ENCODE measurements at regions of chr3 and their contacts with region 1.

Region 1: GRCh38 chr3:46078712-46079400 is 51.6 kb upstream of the XCR1 start:
- DNase-seq: peak; percentile 95
- ATAC-seq: peak; percentile 99
- H3K4me3 Mint-ChIP-seq: peak overlapping the region; percentile 29
- H3K27ac Mint-ChIP-seq: peak overlapping the region; percentile 58
- H3K4me1 Mint-ChIP-seq: peaks cover 70% of the 10 kb centered on the region
- H3K27me3 Mint-ChIP-seq: no peaks in the 10 kb centered on the region

Region 2: DNA sequence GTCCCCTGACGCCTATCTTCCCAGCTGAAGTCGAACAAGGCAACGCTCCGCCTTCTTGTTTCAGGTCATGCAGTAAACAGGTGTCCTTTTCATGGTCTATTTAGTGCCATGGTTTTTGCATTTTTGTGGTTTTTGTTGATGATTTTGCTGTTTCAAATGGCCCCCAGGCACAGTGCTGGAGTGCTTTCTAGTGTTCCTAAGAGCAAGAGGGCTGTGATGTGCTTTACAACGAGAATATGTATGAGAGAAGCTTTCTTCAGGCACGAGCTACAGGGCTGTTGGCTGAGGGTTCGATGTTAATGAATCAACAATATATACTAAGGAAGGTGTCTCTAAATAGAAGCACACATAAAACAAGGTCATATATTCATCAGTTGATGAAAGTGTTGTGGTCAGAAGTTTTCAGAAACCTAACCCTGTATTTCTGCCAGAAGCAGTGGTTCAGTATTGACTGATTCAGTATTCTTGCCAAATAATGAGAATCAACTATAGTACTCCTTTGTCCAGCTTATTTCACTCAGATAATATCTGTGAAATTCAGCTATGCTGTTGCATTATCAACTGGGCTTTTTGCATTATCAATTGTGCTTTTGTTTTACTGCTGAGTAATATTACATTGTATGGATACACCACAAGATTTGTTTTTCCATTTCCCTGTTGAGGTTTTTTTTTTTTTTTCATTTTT is 465.8 kb before region 1 on chr3:
- CTCF ChIA-PET with region 1: no interaction called
- POLR2A ChIA-PET with region 1: no interaction called
- DNase-seq: no peak
- ATAC-seq: no peak
- H3K4me3 Mint-ChIP-seq: no peak overlapping the region
- H3K27ac Mint-ChIP-seq: peak overlapping the region; percentile 43
- H3K4me1 Mint-ChIP-seq: peaks cover 35% of the 10 kb centered on the region
- H3K27me3 Mint-ChIP-seq: no peaks in the 10 kb centered on the region

Region 3: DNA sequence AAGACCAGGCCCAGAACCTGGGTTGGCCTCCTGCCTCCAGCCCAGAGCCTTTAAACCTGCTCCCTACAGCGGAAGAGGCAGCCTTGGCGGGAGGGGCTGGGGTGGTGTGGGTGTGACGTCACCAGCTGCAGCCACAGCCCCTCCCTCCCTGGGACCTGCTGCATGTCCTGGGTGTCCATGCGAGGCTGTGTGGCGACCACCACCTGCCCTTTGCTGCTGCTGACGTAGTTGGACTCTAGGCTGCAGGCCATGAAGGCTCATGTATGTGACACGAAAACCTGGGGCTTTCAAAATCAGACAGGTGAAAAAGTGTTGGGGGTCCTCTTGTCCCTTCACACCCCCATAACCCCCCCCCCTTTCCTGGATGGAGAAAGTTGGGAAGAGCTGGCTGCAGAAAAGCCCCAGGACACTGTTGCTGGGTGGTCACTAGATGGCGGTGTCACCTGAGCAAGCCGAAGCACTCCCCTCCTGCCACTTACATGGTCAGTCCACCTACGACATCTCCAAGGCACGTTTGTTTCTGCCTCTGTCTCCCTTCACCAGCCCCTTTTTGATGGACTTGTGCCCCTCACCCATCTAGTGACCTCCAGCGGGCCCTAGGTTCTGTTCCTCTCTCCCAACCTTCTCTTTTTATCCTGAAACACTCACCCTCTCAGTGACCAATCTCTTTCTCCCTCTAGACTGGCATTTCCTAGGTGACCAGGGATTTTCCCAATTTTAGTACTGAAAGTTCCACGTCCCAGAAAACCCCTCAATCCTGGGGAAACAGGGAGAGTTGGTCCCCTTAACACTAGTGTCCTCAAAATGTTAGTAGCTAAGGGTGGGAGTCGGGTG is 317.8 kb before region 1 on chr3:
- CTCF ChIA-PET with region 1: interaction called, 39 read pairs
- POLR2A ChIA-PET with region 1: no interaction called
- DNase-seq: peak; percentile 61
- ATAC-seq: peak; percentile 64
- H3K4me3 Mint-ChIP-seq: no peak overlapping the region
- H3K27ac Mint-ChIP-seq: no peak overlapping the region
- H3K4me1 Mint-ChIP-seq: peaks cover 5% of the 10 kb centered on the region
- H3K27me3 Mint-ChIP-seq: peaks cover 4% of the 10 kb centered on the region

Region 4: DNA sequence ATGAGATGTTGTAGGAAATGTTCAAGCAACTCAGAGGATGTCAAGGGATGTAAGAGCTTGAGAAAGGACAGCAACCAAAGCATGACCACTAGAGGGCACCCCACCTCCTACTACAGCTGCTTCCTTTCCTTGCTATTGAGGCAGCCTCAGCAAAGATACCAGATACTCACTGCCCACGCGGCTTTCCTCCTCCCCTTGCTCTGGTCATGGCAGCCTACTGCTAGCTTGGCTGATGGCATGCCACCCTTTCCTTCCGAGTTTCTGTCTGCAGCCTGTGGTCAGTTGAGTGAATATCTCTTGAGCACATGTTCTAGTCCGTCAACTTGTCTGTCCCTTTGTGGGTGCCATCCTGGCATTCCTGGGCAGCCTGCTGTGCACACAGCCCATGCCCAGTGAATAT is 140.0 kb before region 1 on chr3:
- CTCF ChIA-PET with region 1: interaction called, 389 read pairs
- POLR2A ChIA-PET with region 1: interaction called, 5 read pairs
- DNase-seq: peak; percentile 94
- ATAC-seq: peak; percentile 75
- H3K4me3 Mint-ChIP-seq: no peak overlapping the region
- H3K27ac Mint-ChIP-seq: peak overlapping the region; percentile 56
- H3K4me1 Mint-ChIP-seq: peaks cover 65% of the 10 kb centered on the region
- H3K27me3 Mint-ChIP-seq: no peaks in the 10 kb centered on the region

Region 5: DNA sequence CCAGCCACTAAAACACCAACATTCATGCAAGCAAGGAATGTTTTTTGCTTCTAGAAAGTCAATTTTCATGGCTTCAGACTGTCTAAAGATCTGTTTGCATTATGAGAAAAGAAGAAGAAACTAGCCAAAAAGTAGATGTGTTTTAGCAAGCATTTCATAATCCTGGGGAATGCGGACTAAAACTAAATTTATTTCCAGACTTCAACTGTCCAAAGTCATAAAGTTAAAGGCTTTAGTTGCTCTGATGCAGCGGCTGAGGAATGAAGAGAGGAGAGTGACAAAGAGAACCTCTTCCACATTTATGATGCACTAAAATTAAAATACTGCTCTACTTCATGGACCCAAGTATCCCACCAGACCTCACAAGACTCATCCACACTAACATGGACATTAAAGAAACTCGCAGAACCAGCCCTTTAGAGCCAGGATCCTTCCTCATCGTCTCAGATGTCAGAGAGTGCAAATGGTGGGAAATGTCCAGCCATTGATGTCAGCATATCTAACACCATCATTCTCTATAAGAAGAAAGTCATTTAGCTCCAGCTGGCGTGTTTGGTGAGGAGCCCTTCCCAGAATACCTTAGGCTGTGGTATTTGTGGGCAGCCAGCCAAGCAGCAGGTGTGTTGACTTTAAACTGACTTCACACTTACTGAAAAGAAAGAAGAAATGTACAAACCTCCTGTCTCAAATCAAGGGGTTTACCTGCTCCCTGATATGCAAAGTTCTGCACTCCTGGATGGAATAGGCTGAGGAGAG is 100.7 kb before region 1 on chr3:
- CTCF ChIA-PET with region 1: interaction called, 35 read pairs
- POLR2A ChIA-PET with region 1: no interaction called
- DNase-seq: peak; percentile 81
- ATAC-seq: peak; percentile 55
- H3K4me3 Mint-ChIP-seq: peak overlapping the region; percentile 56
- H3K27ac Mint-ChIP-seq: peak overlapping the region; percentile 88
- H3K4me1 Mint-ChIP-seq: peaks cover 91% of the 10 kb centered on the region
- H3K27me3 Mint-ChIP-seq: no peaks in the 10 kb centered on the region

Region 6: DNA sequence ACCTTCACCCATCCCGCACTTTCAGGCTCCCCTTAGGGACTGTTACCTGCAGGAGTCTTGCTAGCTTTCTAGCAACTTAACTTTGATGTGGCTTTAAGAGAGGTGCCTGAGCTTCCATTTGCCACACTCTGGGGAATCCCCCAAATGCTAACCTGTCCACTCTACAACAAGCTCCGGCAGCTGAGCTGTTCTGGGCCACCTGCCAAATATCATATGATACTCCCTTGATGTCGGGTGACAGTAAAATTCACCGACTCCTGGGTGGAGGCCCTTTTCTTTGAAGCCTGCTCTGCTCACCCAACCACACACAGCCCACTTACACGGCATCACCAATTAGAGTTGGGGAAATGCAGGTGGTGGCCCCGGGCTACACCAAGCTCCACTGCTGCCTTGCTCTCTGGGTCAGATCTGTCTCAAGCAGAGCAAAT is 13.5 kb before region 1 on chr3:
- CTCF ChIA-PET with region 1: interaction called, 129 read pairs
- POLR2A ChIA-PET with region 1: no interaction called
- DNase-seq: peak; percentile 84
- ATAC-seq: peak; percentile 96
- H3K4me3 Mint-ChIP-seq: peak overlapping the region; percentile 39
- H3K27ac Mint-ChIP-seq: peak overlapping the region; percentile 74
- H3K4me1 Mint-ChIP-seq: peaks cover 58% of the 10 kb centered on the region
- H3K27me3 Mint-ChIP-seq: peaks cover 31% of the 10 kb centered on the region

Region 7: GRCh38 chr3:46214751-46215352 is 136.0 kb after region 1 on chr3:
- CTCF ChIA-PET with region 1: interaction called, 150 read pairs
- POLR2A ChIA-PET with region 1: no interaction called
- DNase-seq: peak; percentile 64
- ATAC-seq: peak; percentile 13
- H3K4me3 Mint-ChIP-seq: no peak overlapping the region
- H3K27ac Mint-ChIP-seq: no peak overlapping the region
- H3K4me1 Mint-ChIP-seq: peaks cover 32% of the 10 kb centered on the region
- H3K27me3 Mint-ChIP-seq: no peaks in the 10 kb centered on the region